Activated CD4-positive, alpha-beta memory T cell treated with anti-CD3 and anti-CD28 coated beads for 36 hours (primary cell): ENCODE measurements at regions of chr6 and their contacts with region 1.

Region 1: GRCh38 chr6:31356946-31357466 is at the start of gene HLA-B:
- DNase-seq: peak; percentile 90
- H3K4me3 Mint-ChIP-seq: peak within 1 kb of the TSS; percentile 99
- H3K27ac Mint-ChIP-seq: peak within 1 kb of the TSS; percentile 99
- H3K4me1 Mint-ChIP-seq: peaks cover 60% of the 10 kb centered on the region
- H3K27me3 Mint-ChIP-seq: no peaks in the 10 kb centered on the region
- total RNA-seq, gene HLA-B: 3,016 to 3,060 TPM

Region 2: DNA sequence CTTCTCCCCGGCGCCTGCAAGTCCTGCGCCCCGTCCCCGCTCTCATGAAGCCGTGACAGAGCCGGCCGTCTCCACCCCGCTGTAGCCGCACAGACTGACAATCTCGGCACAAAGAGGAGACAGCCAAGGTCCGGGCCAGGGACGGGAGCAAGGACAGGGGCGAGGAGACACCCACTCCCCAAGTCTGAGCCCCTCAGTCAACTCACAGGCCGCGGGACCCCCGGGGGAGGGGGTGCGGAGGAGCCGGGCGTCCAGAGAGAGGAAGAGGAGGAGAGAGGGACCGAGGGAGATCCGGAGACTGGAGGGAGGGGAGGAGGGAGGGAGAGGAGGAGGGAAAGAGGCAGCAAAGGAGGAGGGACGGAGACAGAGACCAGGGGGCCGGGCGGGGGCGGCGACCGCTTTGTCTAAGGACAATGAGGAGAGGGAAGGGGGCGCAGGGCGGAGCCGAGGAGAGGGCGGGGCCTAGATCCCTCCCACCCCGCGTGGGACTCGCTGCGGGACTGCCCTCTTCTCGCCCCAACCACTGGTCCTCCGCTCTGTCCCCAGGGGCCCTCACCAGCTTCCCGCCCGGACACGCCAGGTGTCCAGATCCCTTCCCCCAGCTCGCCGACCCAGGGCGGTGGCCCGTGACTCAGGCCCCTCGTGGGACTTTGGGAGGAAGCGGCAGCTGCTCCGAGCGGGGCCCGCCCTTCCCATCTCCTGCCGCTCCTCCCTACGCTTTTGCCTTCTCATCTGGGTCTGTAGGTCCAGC is 669.9 kb before region 1 on chr6:
- CTCF ChIA-PET with region 1: no interaction called
- POLR2A ChIA-PET with region 1: no interaction called
- intact Hi-C with region 1: loop called (anchors 5 kb)
- DNase-seq: peak; percentile 90
- H3K4me3 Mint-ChIP-seq: peak overlapping the region; percentile 100
- H3K27ac Mint-ChIP-seq: peak overlapping the region; percentile 99
- H3K4me1 Mint-ChIP-seq: peaks cover 38% of the 10 kb centered on the region
- H3K27me3 Mint-ChIP-seq: no peaks in the 10 kb centered on the region

Region 3: DNA sequence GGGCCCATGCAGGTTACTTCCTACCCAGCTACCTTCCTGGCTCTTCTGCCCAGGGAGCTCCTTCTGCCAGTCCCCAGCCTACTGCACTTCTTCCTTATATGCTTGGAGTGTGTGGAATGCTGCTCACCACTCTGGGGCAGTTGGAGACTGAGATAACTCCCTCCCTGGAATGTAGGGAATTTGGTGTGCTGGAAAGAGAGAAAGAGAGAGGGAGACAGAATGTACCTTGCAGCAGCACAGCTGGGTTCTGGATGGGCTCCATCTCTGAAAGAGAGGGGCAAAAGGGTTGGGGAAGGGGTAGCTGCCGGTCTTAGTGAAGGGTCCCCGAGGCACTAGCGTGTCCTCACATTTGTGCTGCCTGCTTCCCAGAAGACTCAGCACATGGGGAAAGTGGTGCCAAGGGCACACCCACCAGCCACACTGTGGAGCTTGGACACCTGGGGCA is 512.9 kb before region 1 on chr6:
- CTCF ChIA-PET with region 1: no interaction called
- POLR2A ChIA-PET with region 1: no interaction called
- intact Hi-C with region 1: no loop called
- DNase-seq: no peak
- H3K4me3 Mint-ChIP-seq: no peak overlapping the region
- H3K27ac Mint-ChIP-seq: no peak overlapping the region
- H3K4me1 Mint-ChIP-seq: peaks cover 10% of the 10 kb centered on the region
- H3K27me3 Mint-ChIP-seq: peaks cover 5% of the 10 kb centered on the region

Region 4: DNA sequence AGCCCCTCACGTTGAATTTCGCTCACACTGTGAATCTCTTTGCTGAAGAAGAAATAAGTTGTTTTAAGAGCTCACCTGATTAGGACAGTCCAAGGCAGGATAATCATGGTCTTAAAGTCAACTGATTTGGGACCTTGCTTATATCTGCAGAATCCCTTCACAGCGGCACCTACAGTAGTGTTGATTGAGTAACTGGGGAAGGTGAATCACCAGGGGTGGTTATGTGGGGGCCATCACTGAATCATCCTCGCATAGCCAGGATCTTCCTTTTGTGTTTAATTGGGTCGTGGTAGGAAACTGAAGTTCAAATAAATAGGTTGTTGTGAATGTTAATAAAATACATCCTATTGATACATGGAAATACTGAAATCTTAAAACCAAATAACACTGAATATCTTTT is 26.1 kb after region 1 on chr6:
- CTCF ChIA-PET with region 1: no interaction called
- POLR2A ChIA-PET with region 1: no interaction called
- intact Hi-C with region 1: no loop called
- DNase-seq: peak; percentile 25
- H3K4me3 Mint-ChIP-seq: no peak overlapping the region
- H3K27ac Mint-ChIP-seq: no peak overlapping the region
- H3K4me1 Mint-ChIP-seq: no peaks in the 10 kb centered on the region
- H3K27me3 Mint-ChIP-seq: peaks cover 11% of the 10 kb centered on the region